ENCODE measurements at regions of chr1 and their contacts with region 1.

Region 1: DNA sequence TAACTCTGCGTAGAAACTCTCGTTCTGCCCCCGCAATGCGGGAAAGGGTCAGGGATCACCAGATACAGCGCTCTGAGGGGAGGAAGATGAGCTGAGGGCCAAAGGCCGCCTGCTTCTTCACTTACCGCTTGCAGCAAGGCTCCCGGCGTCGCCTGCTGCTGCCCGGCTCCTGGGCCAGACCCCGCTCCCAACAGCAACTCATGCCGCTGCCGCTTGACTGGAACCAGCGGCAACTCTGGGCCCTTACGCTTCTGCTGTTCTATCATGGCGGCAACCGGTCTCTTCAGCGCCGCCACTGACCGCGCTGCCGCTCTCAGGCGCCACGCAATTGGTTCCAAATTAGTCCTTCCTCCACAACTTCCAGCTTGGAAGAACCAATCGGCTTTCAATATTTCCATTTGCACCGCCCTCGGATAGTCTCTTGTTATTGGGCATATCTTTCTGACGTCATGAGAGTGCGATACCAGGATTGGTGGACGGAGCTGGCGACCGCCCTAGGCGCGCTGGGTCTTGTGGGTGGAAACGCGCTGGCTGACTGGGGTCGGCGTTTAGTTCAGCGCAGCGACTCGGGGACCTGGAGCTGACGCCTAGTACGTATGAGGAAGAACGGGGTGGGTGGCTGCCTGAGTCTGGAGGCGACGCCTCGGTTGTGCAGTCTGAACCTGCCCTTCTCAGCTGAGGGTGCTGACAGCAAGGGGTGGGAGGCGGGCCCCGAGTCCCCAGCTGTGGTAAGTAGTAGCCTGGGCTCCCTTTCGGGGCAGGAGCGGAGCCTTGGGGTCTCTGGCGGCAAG is at the starts of genes SNRNP40 and ZCCHC17:
- DNase-seq: peak; percentile 99
- ATAC-seq: peak; percentile 96
- H3K4me3 ChIP-seq: peak within 1 kb of the TSS; percentile 73
- H3K27ac ChIP-seq: peak within 1 kb of the TSS; percentile 77
- H3K4me1 ChIP-seq: peaks cover 2% of the 10 kb centered on the region
- H3K27me3 ChIP-seq: no peaks in the 10 kb centered on the region
- CTCF ChIP-seq: no peak
- POLR2A ChIP-seq: peak; percentile 96
- RAD21 ChIP-seq: no peak
- total RNA-seq, gene SNRNP40: 148 and 178 TPM in 2 replicates
- total RNA-seq, gene ZCCHC17: 48.4 and 63.0 TPM in 2 replicates

Region 2: DNA sequence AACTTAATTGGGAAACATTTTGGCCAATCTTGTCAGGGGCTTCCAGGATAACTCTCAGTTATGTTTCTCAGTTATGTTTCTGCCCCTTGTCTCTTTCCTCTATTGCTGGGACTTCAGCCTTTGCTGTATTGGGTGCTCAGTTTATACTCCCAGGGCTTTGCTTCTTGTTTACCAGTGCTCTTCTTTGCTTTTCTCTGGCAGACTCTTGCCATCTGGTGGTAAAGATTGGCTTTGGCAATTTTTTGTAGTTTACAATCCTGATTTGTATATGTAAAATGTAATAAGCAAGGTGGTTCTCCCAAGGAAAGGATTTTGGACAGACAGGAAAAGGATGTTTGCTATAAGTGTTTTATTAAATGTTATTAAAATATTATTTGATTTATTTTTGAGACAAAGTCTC is 38.3 kb after region 1 on chr1:
- CTCF ChIA-PET with region 1: interaction called, 3 read pairs
- POLR2A ChIA-PET with region 1: no interaction called
- dilution Hi-C with region 1: no loop called
- in situ Hi-C with region 1: no loop called
- intact Hi-C with region 1: loop called (anchors 1 kb)
- DNase-seq: peak; percentile 46
- ATAC-seq: peak; percentile 81
- H3K4me3 ChIP-seq: no peak overlapping the region
- H3K27ac ChIP-seq: no peak overlapping the region
- H3K4me1 ChIP-seq: no peaks in the 10 kb centered on the region
- H3K27me3 ChIP-seq: no peaks in the 10 kb centered on the region
- CTCF ChIP-seq: peak; percentile 51
- POLR2A ChIP-seq: no peak
- RAD21 ChIP-seq: peak; percentile 65

Region 3: GRCh38 chr1:31422505-31423319 is 126.0 kb after region 1 on chr1:
- CTCF ChIA-PET with region 1: no interaction called
- POLR2A ChIA-PET with region 1: no interaction called
- dilution Hi-C with region 1: no loop called
- in situ Hi-C with region 1: no loop called
- intact Hi-C with region 1: loop called (anchors 1 kb)
- DNase-seq: peak; percentile 90
- ATAC-seq: peak; percentile 94
- H3K4me3 ChIP-seq: no peak overlapping the region
- H3K27ac ChIP-seq: peak overlapping the region; percentile 24; the same call in 1 of the 2 replicates
- H3K4me1 ChIP-seq: peaks cover 10% of the 10 kb centered on the region
- H3K27me3 ChIP-seq: no peaks in the 10 kb centered on the region
- CTCF ChIP-seq: peak; percentile 94
- POLR2A ChIP-seq: no peak
- RAD21 ChIP-seq: peak; percentile 97

Region 4: GRCh38 chr1:31904339-31905092 is 607.8 kb after region 1 on chr1:
- CTCF ChIA-PET with region 1: no interaction called
- POLR2A ChIA-PET with region 1: no interaction called
- dilution Hi-C with region 1: no loop called
- in situ Hi-C with region 1: no loop called
- intact Hi-C with region 1: no loop called
- DNase-seq: peak; percentile 43
- ATAC-seq: no peak
- H3K4me3 ChIP-seq: no peak overlapping the region
- H3K27ac ChIP-seq: no peak overlapping the region
- H3K4me1 ChIP-seq: peaks cover 1% of the 10 kb centered on the region; the same call in 1 of the 2 replicates
- H3K27me3 ChIP-seq: no peaks in the 10 kb centered on the region
- CTCF ChIP-seq: no peak
- POLR2A ChIP-seq: no peak
- RAD21 ChIP-seq: no peak